ENCODE measurements at regions of chr7 and their contacts with region 1.

Region 1: GRCh38 chr7:23597094-23598091 is at the start of gene CCDC126:
- DNase-seq: peak; percentile 75
- H3K4me3 Mint-ChIP-seq: peak within 1 kb of the TSS; percentile 93
- H3K27ac Mint-ChIP-seq: peak within 1 kb of the TSS; percentile 89
- H3K4me1 Mint-ChIP-seq: peaks cover 63% of the 10 kb centered on the region
- H3K27me3 Mint-ChIP-seq: peaks cover 2% of the 10 kb centered on the region
- total RNA-seq, gene CCDC126: 8.2 and 10.7 TPM in 2 replicates

Region 2: DNA sequence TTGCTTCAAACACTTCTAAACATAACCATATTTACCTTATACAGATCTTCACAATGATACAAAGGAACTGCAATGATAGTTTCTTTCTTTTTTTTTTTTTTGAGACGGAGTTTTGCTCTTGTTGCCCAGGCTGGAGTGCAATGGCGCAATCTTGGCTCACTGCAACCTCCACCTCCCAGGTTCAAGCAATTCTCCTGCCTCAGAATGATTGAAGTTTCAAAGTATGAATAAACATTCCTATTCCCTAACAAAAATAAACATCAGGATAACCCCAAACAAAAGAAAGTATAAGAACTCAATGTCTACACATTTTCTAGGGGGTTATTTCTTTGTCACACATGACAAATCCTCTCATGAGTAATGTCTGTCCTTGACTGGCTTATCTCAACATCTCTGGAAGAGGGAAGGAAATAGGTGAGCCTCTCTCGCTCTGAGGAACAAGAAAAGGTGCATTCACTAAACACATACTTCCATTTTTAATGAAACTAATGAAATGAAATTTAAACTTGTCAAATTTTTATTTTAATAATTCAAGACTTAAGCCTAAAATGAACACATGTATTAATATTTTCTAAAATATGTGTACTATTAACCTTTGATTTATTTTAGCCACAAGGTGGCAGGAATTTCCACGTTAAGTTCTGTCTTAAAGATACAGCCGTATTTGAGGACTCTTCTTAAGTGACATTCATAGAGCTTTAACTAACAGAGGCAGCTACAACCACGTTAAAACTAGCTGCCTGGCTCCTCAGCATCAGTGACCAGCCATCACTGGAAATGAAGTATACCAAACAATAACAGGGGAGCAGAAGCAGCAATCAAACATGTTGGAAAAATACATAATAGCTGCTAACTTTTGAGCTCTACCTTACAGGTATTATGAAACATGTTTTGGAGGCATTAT is 240.0 kb before region 1 on chr7:
- intact Hi-C with region 1: loop called (anchors 1 kb)
- DNase-seq: no peak
- H3K4me3 Mint-ChIP-seq: peak overlapping the region; percentile 49
- H3K27ac Mint-ChIP-seq: peak overlapping the region; percentile 49
- H3K4me1 Mint-ChIP-seq: peaks cover 26% of the 10 kb centered on the region
- H3K27me3 Mint-ChIP-seq: peaks cover 48% of the 10 kb centered on the region

Region 3: GRCh38 chr7:23474094-23474828 is 123.1 kb before region 1 on chr7:
- intact Hi-C with region 1: loop called (anchors 2 kb)
- DNase-seq: peak; percentile 89
- H3K4me3 Mint-ChIP-seq: peak overlapping the region; percentile 83
- H3K27ac Mint-ChIP-seq: peak overlapping the region; percentile 57
- H3K4me1 Mint-ChIP-seq: peaks cover 39% of the 10 kb centered on the region
- H3K27me3 Mint-ChIP-seq: peaks cover 63% of the 10 kb centered on the region

Region 4: DNA sequence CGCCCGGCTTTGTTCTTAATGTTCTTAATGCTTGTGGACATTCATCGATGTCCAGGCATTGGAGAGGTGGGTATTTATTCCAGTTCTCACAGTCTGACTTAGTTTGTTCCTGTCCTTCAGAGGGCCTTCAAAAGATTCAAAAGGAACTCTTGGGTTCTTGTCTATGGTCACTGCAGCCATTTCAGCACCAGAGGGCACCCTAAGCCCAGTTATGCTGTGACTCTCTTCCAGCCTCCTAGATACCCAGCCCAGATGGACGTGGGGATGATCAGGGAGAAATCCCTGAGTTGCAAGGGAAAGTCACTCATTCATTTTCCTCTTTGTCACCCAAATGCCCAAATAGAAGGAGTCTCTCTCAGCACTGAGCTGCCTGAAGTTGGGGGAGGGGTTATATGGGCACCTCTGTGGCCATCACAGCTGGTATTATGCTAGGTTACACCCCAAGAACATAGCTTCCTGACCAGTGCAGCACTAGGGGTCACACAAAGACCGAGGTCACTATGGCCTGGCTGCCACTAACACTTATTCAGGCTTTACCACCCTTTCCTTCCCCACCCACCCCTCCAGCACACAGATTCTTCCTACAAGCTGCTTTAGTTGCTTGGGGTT is 26.7 kb before region 1 on chr7:
- intact Hi-C with region 1: loop called (anchors 1 kb)
- DNase-seq: peak; percentile 48
- H3K4me3 Mint-ChIP-seq: no peak overlapping the region
- H3K27ac Mint-ChIP-seq: no peak overlapping the region
- H3K4me1 Mint-ChIP-seq: peaks cover 5% of the 10 kb centered on the region
- H3K27me3 Mint-ChIP-seq: peaks cover 6% of the 10 kb centered on the region

Region 5: GRCh38 chr7:24572997-24573625 is 975.7 kb after region 1 on chr7 and contains the start of gene PALS2:
- intact Hi-C with region 1: loop called (anchors 5 kb)
- DNase-seq: peak; percentile 77
- H3K4me3 Mint-ChIP-seq: peak within 1 kb of the TSS; percentile 94
- H3K27ac Mint-ChIP-seq: peak within 1 kb of the TSS; percentile 84
- H3K4me1 Mint-ChIP-seq: peaks cover 29% of the 10 kb centered on the region
- H3K27me3 Mint-ChIP-seq: peaks cover 41% of the 10 kb centered on the region
- total RNA-seq, gene PALS2: 34.9 and 42.2 TPM in 2 replicates

Region 6: DNA sequence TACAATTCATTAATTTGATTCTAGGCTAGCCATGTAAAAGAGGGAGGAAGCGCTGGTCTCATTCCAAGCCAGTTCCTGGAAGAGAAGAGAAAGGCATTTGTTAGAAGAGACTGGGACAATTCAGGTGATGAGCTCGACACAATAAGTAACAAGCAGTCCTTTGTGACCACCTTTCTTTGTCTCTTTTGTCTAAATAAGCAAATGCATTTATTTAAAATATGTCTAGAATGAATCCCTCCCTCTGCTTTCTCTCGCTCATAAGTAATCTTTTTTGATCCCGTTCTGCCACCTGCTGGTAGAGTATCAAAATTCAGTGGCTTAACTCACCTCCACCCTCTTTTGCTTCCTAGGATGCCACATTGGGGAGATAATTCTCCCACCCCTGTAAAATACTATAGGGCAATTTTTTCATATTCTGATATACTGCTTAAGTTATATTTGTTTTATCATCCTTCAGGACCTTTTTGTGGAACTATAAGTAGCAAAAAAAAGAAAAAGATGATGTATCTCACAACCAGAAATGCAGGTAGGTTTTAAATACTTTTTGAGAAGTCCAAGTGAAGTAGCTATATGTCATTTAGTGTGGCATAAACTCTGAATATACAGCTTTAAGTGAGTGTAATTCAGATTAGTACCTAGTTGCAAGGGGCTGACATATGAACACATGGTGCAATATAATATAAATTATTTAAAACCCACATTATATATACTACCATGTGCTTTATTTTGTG is 1068.3 kb after region 1 on chr7:
- intact Hi-C with region 1: no loop called
- DNase-seq: peak; percentile 14
- H3K4me3 Mint-ChIP-seq: no peak overlapping the region
- H3K27ac Mint-ChIP-seq: no peak overlapping the region
- H3K4me1 Mint-ChIP-seq: no peaks in the 10 kb centered on the region
- H3K27me3 Mint-ChIP-seq: no peaks in the 10 kb centered on the region

Region 7: DNA sequence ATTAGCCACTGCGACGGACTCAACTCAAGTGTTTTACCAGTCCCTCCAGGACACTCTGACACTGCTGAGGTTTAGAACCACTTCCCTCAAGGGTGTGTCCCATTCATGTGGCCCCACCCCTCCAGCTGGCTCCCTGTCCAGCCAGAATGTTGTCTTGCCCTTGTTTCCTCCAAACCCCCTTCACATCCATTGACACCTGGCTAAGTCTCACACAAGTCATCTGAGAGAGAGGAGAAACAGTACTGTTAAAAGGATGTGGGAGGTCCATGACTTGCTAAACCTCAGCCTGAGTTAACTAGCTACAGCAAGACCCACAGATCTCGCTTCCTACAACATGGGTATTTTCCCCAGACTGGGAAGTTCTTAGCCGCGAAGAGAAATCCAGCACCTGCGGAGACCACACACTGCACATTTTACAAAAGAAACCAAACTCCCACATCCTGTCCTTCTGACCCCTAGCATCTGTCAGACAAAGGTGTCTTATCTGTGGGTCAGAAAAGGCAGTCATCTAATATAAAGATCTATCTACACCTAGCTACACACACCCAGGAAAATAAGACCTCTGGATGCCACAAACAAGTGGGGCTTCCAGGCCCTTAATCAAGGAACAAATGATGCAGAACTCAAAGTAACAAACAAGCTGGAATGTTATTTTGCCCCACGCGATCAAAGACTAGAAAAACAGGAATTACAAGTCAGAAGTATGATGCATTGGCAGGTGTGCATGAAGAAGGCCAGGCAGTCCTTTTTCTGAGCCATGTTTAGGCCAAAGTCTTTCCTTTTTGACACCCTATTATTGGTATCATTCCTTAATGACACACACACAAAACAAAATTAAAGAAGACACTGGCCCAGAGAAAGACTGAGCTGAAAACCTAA is 1368.7 kb after region 1 on chr7:
- intact Hi-C with region 1: loop called (anchors 5 kb)
- DNase-seq: peak; percentile 52
- H3K4me3 Mint-ChIP-seq: peak overlapping the region; percentile 59
- H3K27ac Mint-ChIP-seq: peak overlapping the region; percentile 89
- H3K4me1 Mint-ChIP-seq: peaks cover 80% of the 10 kb centered on the region
- H3K27me3 Mint-ChIP-seq: no peaks in the 10 kb centered on the region